Spleen (tissue), 13 donors: ENCODE measurements at regions of chr14 and their contacts with region 1.

Region 1: GRCh38 chr14:20613094-20614037 is 22.2 kb upstream of the RNASE12 start:
- DNase-seq: peak; percentile 91
- H3K4me3 ChIP-seq: peak overlapping the region; percentile 31 to 69 (median 43)
- H3K27ac ChIP-seq: peak overlapping the region; percentile 58 to 86 (median 76)
- H3K4me1 ChIP-seq: peaks cover 14 to 78% (median 57%) of the 10 kb centered on the region in 6 donors
- H3K27me3 ChIP-seq: no peaks in the 10 kb centered on the region
- CTCF ChIP-seq: peak; percentile 53 to 89 (median 68)
- POLR2A ChIP-seq: no peak

Region 2: DNA sequence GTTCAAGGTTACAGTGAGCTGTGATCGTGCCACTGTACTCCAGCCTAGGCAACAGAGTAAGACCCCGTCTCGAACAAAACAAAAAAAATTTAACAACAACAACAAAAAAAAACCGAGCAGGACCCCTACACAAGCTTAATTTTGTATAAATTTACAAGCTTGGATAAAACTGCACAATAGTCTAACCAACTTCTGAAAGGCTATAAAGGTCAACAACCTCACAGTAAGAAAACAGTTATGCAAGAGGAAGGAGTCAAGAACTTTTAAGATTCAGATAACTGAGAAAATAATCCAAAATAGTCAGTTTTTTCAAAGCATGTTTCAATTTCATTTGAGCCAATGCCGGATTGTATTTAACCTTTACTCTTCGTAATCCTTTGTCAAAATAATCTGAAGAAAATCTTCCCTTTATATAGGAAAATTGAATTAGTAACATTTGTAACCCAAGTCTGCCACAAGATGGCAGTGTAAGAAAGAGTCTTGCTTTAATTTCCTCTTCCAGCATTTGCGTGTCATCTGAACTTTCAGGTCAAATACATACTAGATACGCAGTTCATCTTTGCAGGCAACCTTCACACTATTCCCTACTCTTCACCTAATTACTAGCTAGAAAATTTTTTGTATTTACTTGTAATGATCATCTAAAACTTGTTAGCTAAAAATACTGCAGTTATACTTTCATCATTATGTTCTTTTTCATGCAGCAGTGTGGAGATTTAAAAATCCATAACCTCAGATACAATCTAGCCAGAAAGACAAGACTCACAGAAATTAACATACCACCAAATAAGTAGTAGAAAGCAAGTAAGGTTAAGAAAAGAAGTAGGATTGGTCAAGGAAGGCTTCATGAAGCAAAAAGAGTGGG is 286.1 kb before region 1 on chr14:
- intact Hi-C with region 1: loop called (anchors 5 kb)
- DNase-seq: no peak
- H3K4me3 ChIP-seq: no peak overlapping the region
- H3K27ac ChIP-seq: peak overlapping the region in 4 of 8 donors; percentile 8 to 42 (median 24)
- H3K4me1 ChIP-seq: peaks cover 6 to 42% (median 27%) of the 10 kb centered on the region in 6 donors
- H3K27me3 ChIP-seq: no peaks in the 10 kb centered on the region
- CTCF ChIP-seq: peak; percentile 59 to 82 (median 75)
- POLR2A ChIP-seq: no peak

Region 3: GRCh38 chr14:20413045-20413799 is 200.1 kb before region 1 on chr14 and contains the start of gene TEP1:
- intact Hi-C with region 1: loop called (anchors 5 kb)
- DNase-seq: peak; percentile 96
- H3K4me3 ChIP-seq: peak within 1 kb of the TSS; percentile 66 to 91 (median 76)
- H3K27ac ChIP-seq: peak within 1 kb of the TSS; percentile 85 to 99 (median 96)
- H3K4me1 ChIP-seq: peaks cover 13 to 61% (median 43%) of the 10 kb centered on the region in 6 donors
- H3K27me3 ChIP-seq: no peaks in the 10 kb centered on the region
- CTCF ChIP-seq: no peak
- POLR2A ChIP-seq: peak in 1 of 3 donors; percentile 62
- total RNA-seq, gene TEP1: 55.1 to 91.7 (median 70.5) TPM

Region 4: DNA sequence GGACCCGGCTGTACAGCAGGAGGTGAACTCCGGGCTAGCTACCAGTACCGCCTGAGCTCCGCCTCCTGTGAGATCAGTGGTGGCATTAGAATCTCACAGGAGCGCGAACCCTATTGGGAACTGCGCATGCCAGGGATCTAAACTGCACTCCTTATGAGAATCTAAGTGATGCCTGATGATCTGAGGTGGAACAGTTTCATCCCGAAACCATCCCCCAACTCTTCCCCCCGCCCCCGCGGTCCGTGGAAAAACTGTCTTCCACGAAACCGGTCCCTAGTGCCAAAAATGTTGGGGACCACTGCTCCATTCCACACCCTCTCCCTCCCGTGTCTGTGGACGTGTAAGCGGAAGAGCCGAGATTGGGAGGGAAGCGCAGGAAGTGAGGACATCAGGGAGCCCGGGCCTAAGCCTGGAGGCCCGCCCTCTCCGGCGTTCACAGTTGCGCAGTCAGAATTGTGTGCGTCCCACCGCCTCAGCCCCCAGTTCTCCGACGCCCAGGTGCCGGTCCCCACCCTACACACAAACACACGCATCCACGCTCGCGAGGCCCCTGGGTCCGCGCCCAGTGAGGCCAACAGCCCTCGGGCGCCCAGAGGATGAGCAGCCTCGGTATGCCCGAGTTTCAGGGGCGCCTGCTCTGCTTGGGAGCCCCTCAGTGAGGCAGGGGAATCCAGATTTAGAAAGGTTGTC is 69.2 kb after region 1 on chr14:
- intact Hi-C with region 1: loop called (anchors 5 kb)
- DNase-seq: peak; percentile 94
- H3K4me3 ChIP-seq: peak overlapping the region; percentile 44 to 88 (median 72)
- H3K27ac ChIP-seq: peak overlapping the region; percentile 94 to 100 (median 98)
- H3K4me1 ChIP-seq: peaks cover 12 to 61% (median 52%) of the 10 kb centered on the region in 6 donors
- H3K27me3 ChIP-seq: no peaks in the 10 kb centered on the region
- CTCF ChIP-seq: peak in 2 of 11 experiments; percentile 11 to 13
- POLR2A ChIP-seq: peak in 2 of 3 donors; percentile 78 to 84